Activated naive CD4-positive, alpha-beta T cell treated with anti-CD3 and anti-CD28 coated beads, Interleukin-2, amount 10 ng/mL, durations not matched to agents 7 days and 5 days (primary cell): ENCODE measurements at regions of chr2 and their contacts with region 1.

Region 1: DNA sequence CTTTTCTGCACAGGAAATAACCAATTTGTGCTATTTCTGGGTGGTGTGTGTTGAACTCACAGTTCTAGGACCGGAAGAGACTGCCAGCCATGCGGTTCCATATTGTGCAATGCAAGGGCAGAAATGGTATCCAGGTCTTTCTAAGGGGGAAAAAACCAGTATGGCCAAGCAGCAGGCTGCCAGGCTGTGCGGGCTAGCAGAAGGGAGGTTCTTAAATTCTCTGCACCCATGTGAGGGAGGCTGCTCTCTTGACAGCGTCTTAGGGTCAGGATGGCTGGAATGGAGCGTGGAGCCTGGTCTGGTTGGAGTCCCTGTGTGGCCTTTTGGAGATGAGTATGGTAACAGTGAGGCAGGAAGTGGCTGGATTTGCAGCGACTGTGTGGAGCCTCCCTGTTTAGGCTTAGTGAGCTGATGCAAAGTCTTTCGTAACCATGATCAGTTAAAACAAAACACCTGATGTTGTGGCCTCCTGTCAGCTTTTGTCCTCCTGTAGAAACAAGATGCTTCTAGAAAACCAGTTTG is 52.6 kb downstream of the NCK2 start:
- DNase-seq: peak; percentile 70
- H3K4me3 Mint-ChIP-seq: peak overlapping the region; percentile 63
- H3K27ac Mint-ChIP-seq: peak overlapping the region; percentile 98
- H3K4me1 Mint-ChIP-seq: peaks cover 98% of the 10 kb centered on the region
- H3K27me3 Mint-ChIP-seq: no peaks in the 10 kb centered on the region

Region 2: GRCh38 chr2:105653302-105653701 is 144.1 kb before region 1 on chr2:
- CTCF ChIA-PET with region 1: no interaction called
- DNase-seq: no peak
- H3K4me3 Mint-ChIP-seq: no peak overlapping the region
- H3K27ac Mint-ChIP-seq: no peak overlapping the region
- H3K4me1 Mint-ChIP-seq: no peaks in the 10 kb centered on the region
- H3K27me3 Mint-ChIP-seq: peaks cover 11% of the 10 kb centered on the region

Region 3: DNA sequence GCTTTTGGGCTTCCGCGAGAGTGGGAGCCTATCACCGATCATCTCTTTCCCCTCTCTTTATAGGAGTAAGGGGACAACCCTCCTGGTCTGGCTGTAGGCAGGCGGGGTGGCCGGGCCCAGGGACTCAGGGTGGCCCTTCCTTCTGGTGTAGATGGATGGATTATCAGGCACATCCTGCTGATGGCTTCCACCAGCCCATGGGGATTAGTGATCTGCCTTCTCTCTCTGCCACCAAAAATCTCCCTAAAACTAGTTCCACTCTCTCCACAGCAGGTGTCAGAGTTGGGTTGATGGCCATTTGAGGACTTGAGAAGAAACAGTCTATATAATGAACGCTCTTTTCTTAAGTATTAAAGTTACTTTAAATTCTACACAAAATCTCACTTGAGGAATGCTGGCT is 15.2 kb before region 1 on chr2:
- CTCF ChIA-PET with region 1: interaction called, 12 read pairs
- DNase-seq: no peak
- H3K4me3 Mint-ChIP-seq: peak overlapping the region; percentile 44
- H3K27ac Mint-ChIP-seq: peak overlapping the region; percentile 82
- H3K4me1 Mint-ChIP-seq: peaks cover 93% of the 10 kb centered on the region
- H3K27me3 Mint-ChIP-seq: no peaks in the 10 kb centered on the region